Heart right ventricle (tissue), 16 donors: ENCODE measurements at regions of chrX and their contacts with region 1.

Region 1: DNA sequence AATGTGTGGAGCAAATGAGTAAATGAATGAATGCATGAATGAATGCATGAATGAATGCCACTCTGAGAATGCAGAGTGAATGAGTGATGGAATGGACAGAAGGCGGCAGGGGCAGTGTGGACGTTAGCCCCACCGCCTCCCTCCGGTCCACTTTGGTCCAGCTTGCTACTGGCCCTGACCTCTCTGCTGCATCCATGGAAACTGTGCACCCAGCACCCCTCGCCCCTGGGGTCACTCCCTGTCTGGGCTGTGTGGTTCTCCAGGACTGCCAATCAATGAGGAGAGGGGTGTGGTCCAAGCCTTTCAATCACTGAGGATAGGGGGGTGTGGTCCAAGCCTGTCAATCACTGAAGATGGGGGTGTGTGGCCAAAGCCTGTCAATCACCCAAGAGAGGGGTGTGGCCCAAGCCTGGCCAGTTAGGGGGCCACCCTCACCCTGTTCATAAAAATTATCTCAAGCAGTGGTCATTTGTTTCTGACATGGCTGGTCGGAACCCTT is 39.2 kb upstream of the ASMTL start:
- DNase-seq: no peak
- ATAC-seq: peak in 1 of 8 donors; percentile 43
- H3K4me3 ChIP-seq: no peak overlapping the region
- H3K27ac ChIP-seq: peak overlapping the region in 2 of 10 donors; percentile 51 to 54
- H3K4me1 ChIP-seq: peaks cover 0 to 25% (median 14%) of the 10 kb centered on the region in 9 donors
- H3K27me3 ChIP-seq: peaks cover 0 to 7% (median 0%) of the 10 kb centered on the region in 7 donors
- CTCF ChIP-seq: no peak

Region 2: GRCh38 chrX:1391370-1391706 is 100.6 kb before region 1 on chrX:
- intact Hi-C with region 1: no loop called
- DNase-seq: peak in 1 of 2 donors; percentile 95
- ATAC-seq: peak in 5 of 8 donors; percentile 65 to 77 (median 66)
- H3K4me3 ChIP-seq: peak overlapping the region; percentile 75 to 100 (median 97)
- H3K27ac ChIP-seq: peak overlapping the region; percentile 86 to 100 (median 99)
- H3K4me1 ChIP-seq: peaks cover 18 to 65% (median 42%) of the 10 kb centered on the region in 9 donors
- H3K27me3 ChIP-seq: no peaks in the 10 kb centered on the region
- CTCF ChIP-seq: no peak

Region 3: GRCh38 chrX:1580735-1581531 is 89.0 kb after region 1 on chrX:
- intact Hi-C with region 1: loop called in 1 of 10 experiments (anchors 10 kb)
- DNase-seq: peak in 1 of 2 donors; percentile 49
- ATAC-seq: peak in 5 of 8 donors; percentile 47 to 71 (median 65)
- H3K4me3 ChIP-seq: no peak overlapping the region
- H3K27ac ChIP-seq: no peak overlapping the region
- H3K4me1 ChIP-seq: peaks cover 0 to 4% (median 0%) of the 10 kb centered on the region in 9 donors
- H3K27me3 ChIP-seq: peaks cover 0 to 3% (median 0%) of the 10 kb centered on the region in 7 donors
- CTCF ChIP-seq: peak; percentile 57 to 91 (median 72)